ENCODE measurements at regions of chr17 and their contacts with region 1.

Region 1: GRCh38 chr17:66555605-66556004 is 253.2 kb downstream of the PRKCA start:
- DNase-seq: no peak
- H3K27ac ChIP-seq: no peak overlapping the region
- CTCF ChIP-seq: no peak

Region 2: DNA sequence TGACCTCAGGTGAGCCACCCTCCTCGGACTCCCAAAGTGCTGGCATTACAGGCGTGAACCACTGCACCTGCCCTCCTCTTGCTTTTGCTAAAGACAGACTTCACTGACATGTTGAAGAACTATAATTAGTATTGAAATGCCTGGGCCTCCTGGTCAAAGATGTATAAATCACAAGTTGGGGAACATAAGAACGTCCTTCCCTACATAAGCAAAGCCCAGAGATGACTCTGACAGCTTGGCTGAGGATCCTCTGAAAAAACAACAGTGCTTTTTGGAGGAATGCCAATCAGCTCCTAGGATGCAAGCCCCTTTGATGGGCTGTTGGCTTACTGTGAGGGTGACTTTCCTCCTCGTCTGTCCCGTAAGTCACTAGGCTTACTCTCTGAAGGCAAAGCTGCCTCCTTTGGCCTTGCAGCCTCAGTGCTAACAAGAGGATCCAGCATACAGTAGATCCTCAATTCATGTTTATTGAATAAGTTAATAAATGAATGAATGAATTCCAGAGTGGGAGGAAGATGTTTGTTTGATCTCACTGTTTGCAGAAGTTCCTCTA is 332.7 kb before region 1 on chr17:
- CTCF ChIA-PET with region 1: interaction called, 15 read pairs
- POLR2A ChIA-PET with region 1: no interaction called
- DNase-seq: no peak
- H3K27ac ChIP-seq: no peak overlapping the region
- CTCF ChIP-seq: no peak

Region 3: DNA sequence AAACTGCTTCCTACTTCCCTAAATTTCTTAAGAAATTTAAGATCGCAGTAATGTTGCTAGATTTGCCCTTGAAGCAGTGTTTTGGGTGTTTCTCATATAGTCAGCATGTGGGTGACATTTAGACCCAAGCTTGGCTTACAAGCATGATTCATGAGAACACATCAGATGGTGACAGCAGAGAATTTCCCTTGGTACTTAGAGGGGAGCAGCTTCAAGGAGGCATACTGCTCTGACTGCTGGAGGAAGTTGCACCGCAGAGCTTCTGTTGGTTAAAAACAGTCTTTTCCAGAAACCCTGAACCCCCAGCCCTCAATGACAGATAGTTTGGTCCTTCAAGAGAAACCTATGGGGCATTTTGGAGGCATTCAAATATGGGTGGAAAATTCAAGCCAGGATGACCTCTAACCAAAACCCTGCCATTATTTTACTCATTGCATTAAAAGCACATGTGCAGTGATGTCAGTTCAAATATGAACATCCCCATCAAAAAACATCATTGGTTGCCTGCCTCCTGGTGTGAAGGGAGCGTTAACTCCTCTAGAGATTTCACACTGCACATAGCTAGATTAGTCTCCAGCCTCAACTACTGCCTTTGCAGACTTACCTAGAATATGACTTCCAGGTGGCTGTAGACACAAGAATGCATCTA is 77.8 kb after region 1 on chr17:
- CTCF ChIA-PET with region 1: no interaction called
- POLR2A ChIA-PET with region 1: no interaction called
- DNase-seq: no peak
- H3K27ac ChIP-seq: no peak overlapping the region
- CTCF ChIP-seq: no peak

Measured in RWPE1 (cell line).